GM12878 (cell line): ENCODE measurements at regions of chr12 and their contacts with region 1.

Region 1: DNA sequence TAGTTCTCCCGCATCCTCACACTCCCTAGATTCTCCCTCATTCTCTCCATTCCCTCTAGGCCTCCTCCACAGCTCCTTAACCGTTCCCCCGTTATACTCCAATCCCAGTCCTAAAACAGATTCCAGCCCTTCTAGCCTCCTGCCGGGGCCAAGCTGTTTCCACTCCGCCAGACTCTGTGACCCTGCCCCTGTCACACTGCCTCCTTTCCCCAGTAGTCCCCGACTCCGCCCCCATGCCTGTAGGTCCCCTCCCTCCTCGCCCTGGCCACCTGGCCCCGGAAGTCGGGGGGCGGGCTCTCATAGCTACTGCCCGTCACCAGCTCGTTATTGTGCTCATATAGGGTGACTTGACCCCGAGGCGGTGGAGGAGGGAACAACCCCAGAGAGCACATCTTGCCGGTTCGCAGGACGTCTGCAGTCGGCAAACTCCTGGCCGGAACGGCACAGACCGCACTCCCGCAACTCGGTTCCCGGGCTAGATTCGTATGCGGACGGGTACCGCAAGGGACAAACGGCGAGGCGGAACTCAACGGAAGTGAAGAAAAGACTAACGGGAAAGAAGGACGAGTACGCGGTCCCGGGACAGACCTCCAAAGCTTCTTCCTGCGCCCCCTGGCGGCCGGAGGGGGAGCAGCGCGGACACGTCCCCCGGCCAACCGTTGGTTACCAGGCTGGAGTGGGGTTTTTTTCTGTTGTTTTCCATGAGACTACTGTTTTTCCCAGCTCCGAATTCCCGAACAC is at the start of gene AAAS:
- DNase-seq: peak; percentile 86
- ATAC-seq: peak; percentile 85
- H3K4me3 ChIP-seq: peak within 1 kb of the TSS; percentile 82
- H3K27ac ChIP-seq: peak within 1 kb of the TSS; percentile 95
- H3K4me1 ChIP-seq: peaks cover 24% of the 10 kb centered on the region
- H3K27me3 ChIP-seq: no peaks in the 10 kb centered on the region; a peak in 1 of 4 replicates
- CTCF ChIP-seq: peak; percentile 98 to 99 (median 99); a peak in 5 of 6 replicates
- EP300 ChIP-seq: no peak
- POLR2A ChIP-seq: peak; percentile 94
- RAD21 ChIP-seq: peak; percentile 36; the same call in 1 of the 2 replicates
- polyA plus RNA-seq, gene AAAS: 58.6 to 71.5 TPM

Region 2: GRCh38 chr12:53065975-53066931 is 255.0 kb before region 1 on chr12:
- CTCF ChIA-PET with region 1: interaction called, 15 read pairs
- POLR2A ChIA-PET with region 1: no interaction called
- RAD21 ChIA-PET with region 1: interaction called, 5 read pairs
- SMC1A ChIA-PET with region 1: interaction called, 3 read pairs
- in situ Hi-C with region 1: no loop called
- intact Hi-C with region 1: no loop called
- DNase-seq: no peak
- ATAC-seq: peak; percentile 90
- H3K4me3 ChIP-seq: no peak overlapping the region
- H3K27ac ChIP-seq: no peak overlapping the region
- H3K4me1 ChIP-seq: no peaks in the 10 kb centered on the region
- H3K27me3 ChIP-seq: no peaks in the 10 kb centered on the region
- CTCF ChIP-seq: peak; percentile 72 to 85 (median 85)
- EP300 ChIP-seq: no peak
- POLR2A ChIP-seq: no peak
- RAD21 ChIP-seq: peak; percentile 75

Region 3: GRCh38 chr12:53213348-53213747 is 107.9 kb before region 1 on chr12:
- CTCF ChIA-PET with region 1: interaction called, 87 read pairs
- POLR2A ChIA-PET with region 1: interaction called, 6 read pairs
- RAD21 ChIA-PET with region 1: interaction called, 22 read pairs
- SMC1A ChIA-PET with region 1: interaction called, 12 read pairs
- in situ Hi-C with region 1: no loop called
- intact Hi-C with region 1: no loop called
- DNase-seq: no peak
- ATAC-seq: peak; percentile 83
- H3K4me3 ChIP-seq: no peak overlapping the region
- H3K27ac ChIP-seq: no peak overlapping the region
- H3K4me1 ChIP-seq: peaks cover 27% of the 10 kb centered on the region
- H3K27me3 ChIP-seq: no peaks in the 10 kb centered on the region
- CTCF ChIP-seq: peak; percentile 89 to 96 (median 94)
- EP300 ChIP-seq: no peak
- POLR2A ChIP-seq: no peak
- RAD21 ChIP-seq: peak; percentile 96

Region 4: GRCh38 chr12:53295070-53295890 is 26.0 kb before region 1 on chr12 and contains the start of gene PFDN5:
- CTCF ChIA-PET with region 1: interaction called, 142 read pairs
- POLR2A ChIA-PET with region 1: interaction called, 42 read pairs
- RAD21 ChIA-PET with region 1: interaction called, 43 read pairs
- SMC1A ChIA-PET with region 1: interaction called, 46 read pairs
- in situ Hi-C with region 1: no loop called
- intact Hi-C with region 1: loop called (anchors 1 kb)
- DNase-seq: peak; percentile 73
- ATAC-seq: peak; percentile 95
- H3K4me3 ChIP-seq: peak within 1 kb of the TSS; percentile 82
- H3K27ac ChIP-seq: peak within 1 kb of the TSS; percentile 75
- H3K4me1 ChIP-seq: peaks cover 21% of the 10 kb centered on the region
- H3K27me3 ChIP-seq: no peaks in the 10 kb centered on the region
- CTCF ChIP-seq: peak in 1 of 3 experiments; percentile 8; a peak in 1 of 6 replicates
- EP300 ChIP-seq: 0 out of 4 replicates have a peak, but pooled peaks of 1 of the 2 experiments have one; percentile 27
- POLR2A ChIP-seq: peak; percentile 90
- RAD21 ChIP-seq: no peak
- polyA plus RNA-seq, gene PFDN5: 1,522 to 1,596 TPM

Region 5: GRCh38 chr12:53352331-53353256 is 31.4 kb after region 1 on chr12:
- CTCF ChIA-PET with region 1: interaction called, 240 read pairs
- POLR2A ChIA-PET with region 1: interaction called, 3 read pairs
- RAD21 ChIA-PET with region 1: interaction called, 16 read pairs
- SMC1A ChIA-PET with region 1: interaction called, 26 read pairs
- in situ Hi-C with region 1: no loop called
- intact Hi-C with region 1: no loop called
- DNase-seq: peak; percentile 68
- ATAC-seq: peak; percentile 100
- H3K4me3 ChIP-seq: no peak overlapping the region
- H3K27ac ChIP-seq: no peak overlapping the region
- H3K4me1 ChIP-seq: peaks cover 2% of the 10 kb centered on the region
- H3K27me3 ChIP-seq: no peaks in the 10 kb centered on the region
- CTCF ChIP-seq: peak; percentile 82 to 91 (median 89)
- EP300 ChIP-seq: no peak
- POLR2A ChIP-seq: no peak
- RAD21 ChIP-seq: peak; percentile 100

Region 6: GRCh38 chr12:53427905-53428594 is 106.8 kb after region 1 on chr12:
- CTCF ChIA-PET with region 1: interaction called, 75 read pairs
- POLR2A ChIA-PET with region 1: no interaction called
- RAD21 ChIA-PET with region 1: interaction called, 3 read pairs
- SMC1A ChIA-PET with region 1: interaction called, 3 read pairs
- in situ Hi-C with region 1: no loop called
- intact Hi-C with region 1: no loop called
- DNase-seq: no peak
- ATAC-seq: peak; percentile 56
- H3K4me3 ChIP-seq: no peak overlapping the region
- H3K27ac ChIP-seq: no peak overlapping the region
- H3K4me1 ChIP-seq: no peaks in the 10 kb centered on the region
- H3K27me3 ChIP-seq: no peaks in the 10 kb centered on the region
- CTCF ChIP-seq: no peak
- EP300 ChIP-seq: no peak
- POLR2A ChIP-seq: no peak
- RAD21 ChIP-seq: no peak

Region 7: DNA sequence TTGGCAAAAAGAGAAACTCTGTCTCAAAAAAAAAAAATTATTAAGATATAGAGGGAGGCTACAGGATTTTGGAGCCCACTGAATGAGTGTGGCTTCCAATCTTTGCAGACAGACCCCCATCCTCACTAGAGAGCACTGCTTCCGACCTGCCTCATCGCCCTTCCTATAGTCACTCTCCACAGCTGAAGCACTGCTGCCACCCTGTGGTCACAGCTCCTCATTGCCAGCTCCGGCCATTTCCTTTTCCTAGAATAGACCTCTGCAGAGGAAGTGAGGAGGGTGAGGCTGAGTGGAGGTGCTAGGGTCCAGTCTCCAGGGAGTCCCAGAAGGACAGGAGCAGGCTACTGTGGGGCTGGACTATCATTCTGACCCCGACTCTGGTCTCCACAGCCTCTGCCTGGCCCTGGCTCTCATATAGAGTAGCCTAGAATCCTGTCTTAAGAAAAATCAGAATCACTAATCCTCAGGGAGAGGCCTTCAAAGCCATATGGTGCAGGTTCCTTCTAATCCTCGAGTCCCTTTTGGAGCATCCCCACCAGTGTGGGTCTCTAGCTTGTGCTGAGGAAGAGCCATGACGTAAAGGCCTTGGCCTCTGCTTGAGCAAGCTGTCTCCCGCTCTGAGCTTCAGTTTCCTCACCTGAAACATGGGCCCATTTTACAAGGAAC is 187.4 kb after region 1 on chr12:
- CTCF ChIA-PET with region 1: interaction called, 33 read pairs
- POLR2A ChIA-PET with region 1: interaction called, 4 read pairs
- RAD21 ChIA-PET with region 1: interaction called, 9 read pairs
- SMC1A ChIA-PET with region 1: interaction called, 9 read pairs
- in situ Hi-C with region 1: no loop called
- intact Hi-C with region 1: loop called (anchors 2 kb)
- DNase-seq: peak; percentile 60
- ATAC-seq: peak; percentile 99
- H3K4me3 ChIP-seq: no peak overlapping the region
- H3K27ac ChIP-seq: no peak overlapping the region
- H3K4me1 ChIP-seq: 0 out of 2 replicates have a peak, but pooled peaks cover 3% of the 10 kb centered on the region
- H3K27me3 ChIP-seq: no peaks in the 10 kb centered on the region
- CTCF ChIP-seq: peak; percentile 94 to 99 (median 96); a peak in 5 of 6 replicates
- EP300 ChIP-seq: no peak
- POLR2A ChIP-seq: no peak
- RAD21 ChIP-seq: peak; percentile 97

Region 8: DNA sequence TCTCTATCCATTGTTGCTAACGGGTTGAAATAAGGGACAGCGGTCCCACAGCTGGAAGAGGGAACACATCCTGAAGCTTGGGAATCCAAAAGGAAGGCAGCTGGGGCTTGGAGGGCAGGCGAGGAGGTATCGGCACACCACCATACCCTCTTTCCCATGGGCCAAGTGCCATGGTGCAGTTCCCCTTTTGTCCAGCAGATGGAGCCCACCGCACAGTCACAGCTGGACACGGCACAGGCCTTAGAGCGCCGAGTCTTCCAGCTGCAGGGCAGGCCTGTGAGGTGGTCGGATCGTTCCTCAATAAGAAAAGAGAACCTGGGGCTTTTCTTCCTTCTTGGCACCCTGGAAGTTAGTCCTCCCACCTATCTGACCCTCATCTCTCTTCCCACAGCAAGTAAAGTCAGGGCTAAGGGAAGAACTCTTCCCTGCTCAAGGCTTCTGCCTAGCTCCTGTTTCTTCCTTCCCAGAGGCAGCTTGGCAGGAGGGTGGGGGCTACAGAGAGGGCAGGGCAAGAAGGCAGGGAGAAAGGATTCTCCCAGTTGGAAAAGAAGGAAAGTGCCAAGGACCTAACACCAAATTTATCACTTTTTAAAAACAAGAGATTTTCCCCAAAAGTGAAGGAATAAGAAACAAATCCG is 1258.6 kb after region 1 on chr12:
- CTCF ChIA-PET with region 1: no interaction called
- POLR2A ChIA-PET with region 1: no interaction called
- RAD21 ChIA-PET with region 1: no interaction called
- SMC1A ChIA-PET with region 1: no interaction called
- in situ Hi-C with region 1: no loop called
- intact Hi-C with region 1: no loop called
- DNase-seq: no peak
- ATAC-seq: peak; percentile 99
- H3K4me3 ChIP-seq: no peak overlapping the region
- H3K27ac ChIP-seq: no peak overlapping the region
- H3K4me1 ChIP-seq: no peaks in the 10 kb centered on the region
- H3K27me3 ChIP-seq: no peaks in the 10 kb centered on the region; a peak in 1 of 4 replicates
- CTCF ChIP-seq: peak; percentile 87 to 100 (median 100)
- EP300 ChIP-seq: no peak
- POLR2A ChIP-seq: no peak
- RAD21 ChIP-seq: peak; percentile 74